ENCODE measurements at regions of chr5 and their contacts with region 1.

Region 1: GRCh38 chr5:54646356-54647101 is 129.0 kb downstream of the SNX18 start:
- DNase-seq: peak; percentile 47
- ATAC-seq: peak; percentile 93
- H3K4me3 Mint-ChIP-seq: peak overlapping the region; percentile 71
- H3K27ac Mint-ChIP-seq: peak overlapping the region; percentile 93
- H3K4me1 Mint-ChIP-seq: peaks cover 69% of the 10 kb centered on the region
- H3K27me3 Mint-ChIP-seq: no peaks in the 10 kb centered on the region
- CTCF ChIP-seq: no peak

Region 2: GRCh38 chr5:54610197-54610944 is 36.2 kb before region 1 on chr5:
- CTCF ChIA-PET with region 1: no interaction called
- POLR2A ChIA-PET with region 1: interaction called, 18 read pairs
- intact Hi-C with region 1: loop called (anchors 1 kb)
- DNase-seq: no peak
- ATAC-seq: peak; percentile 94
- H3K4me3 Mint-ChIP-seq: peak overlapping the region; percentile 55
- H3K27ac Mint-ChIP-seq: peak overlapping the region; percentile 71
- H3K4me1 Mint-ChIP-seq: peaks cover 50% of the 10 kb centered on the region
- H3K27me3 Mint-ChIP-seq: no peaks in the 10 kb centered on the region
- CTCF ChIP-seq: no peak

Region 3: DNA sequence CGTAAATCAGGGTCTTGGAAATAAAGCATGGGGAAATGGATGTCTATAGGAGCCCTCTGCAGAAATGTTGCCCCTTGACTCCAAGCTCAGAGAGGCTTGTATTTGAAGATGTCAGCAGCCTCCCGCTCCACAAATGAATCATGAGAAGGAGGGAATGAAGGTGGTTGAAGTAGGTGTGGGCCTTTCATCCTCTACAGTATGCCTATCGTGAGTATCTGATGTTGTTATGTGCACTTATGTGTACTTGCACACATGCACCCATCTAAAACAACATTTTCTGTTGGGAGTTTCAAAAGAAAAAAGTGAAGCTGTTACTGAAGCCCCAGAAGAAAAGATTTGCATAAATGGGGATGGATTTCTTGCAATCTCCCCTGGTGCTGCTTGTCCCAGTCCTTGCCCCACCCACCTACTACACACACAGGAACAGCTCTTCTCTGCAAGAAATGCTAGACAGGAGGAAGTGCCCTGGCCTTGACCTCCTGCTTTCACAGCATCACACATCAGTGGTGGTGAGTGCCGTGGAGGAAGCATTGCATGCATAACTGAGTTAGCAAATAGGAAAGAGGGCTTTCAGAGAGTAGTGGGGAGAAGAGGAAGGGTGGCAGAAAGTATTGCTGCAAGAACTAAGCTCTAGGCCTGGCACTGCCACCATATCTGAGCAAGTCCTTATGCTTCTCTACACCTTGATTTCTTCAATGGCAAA is 27.1 kb after region 1 on chr5:
- CTCF ChIA-PET with region 1: no interaction called
- POLR2A ChIA-PET with region 1: interaction called, 7 read pairs
- intact Hi-C with region 1: loop called (anchors 1 kb)
- DNase-seq: peak; percentile 29
- ATAC-seq: peak; percentile 90
- H3K4me3 Mint-ChIP-seq: no peak overlapping the region
- H3K27ac Mint-ChIP-seq: peak overlapping the region; percentile 16
- H3K4me1 Mint-ChIP-seq: peaks cover 80% of the 10 kb centered on the region
- H3K27me3 Mint-ChIP-seq: no peaks in the 10 kb centered on the region
- CTCF ChIP-seq: no peak

Region 4: DNA sequence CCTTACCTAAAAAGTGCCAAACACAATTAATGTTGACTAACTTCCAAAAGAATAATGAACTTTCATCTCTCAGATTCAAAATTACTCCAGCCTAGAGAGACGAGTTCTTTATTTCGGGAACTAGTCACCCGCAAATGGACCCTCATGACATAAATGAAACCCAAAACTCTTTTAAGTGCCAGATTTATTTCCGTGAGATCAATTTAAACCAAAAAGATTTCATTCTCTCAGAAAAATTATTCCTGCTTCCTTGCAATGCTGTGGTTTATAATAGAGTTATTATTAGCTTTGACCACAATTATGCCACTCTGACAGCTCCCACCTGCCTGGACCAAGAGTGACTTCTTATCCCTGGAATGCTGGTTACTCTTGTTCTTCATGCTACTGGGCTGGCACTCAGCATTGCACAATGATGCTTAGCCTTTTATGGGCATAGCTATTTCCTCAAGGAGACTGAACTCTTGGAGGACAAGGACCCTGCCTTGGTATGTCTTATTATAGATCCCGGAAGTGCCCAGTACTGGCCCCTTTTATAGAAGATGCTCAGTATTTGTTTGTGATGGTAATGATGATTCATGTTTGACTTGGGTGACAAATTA is 54.6 kb after region 1 on chr5:
- CTCF ChIA-PET with region 1: no interaction called
- POLR2A ChIA-PET with region 1: no interaction called
- intact Hi-C with region 1: no loop called
- DNase-seq: no peak
- ATAC-seq: no peak
- H3K4me3 Mint-ChIP-seq: no peak overlapping the region
- H3K27ac Mint-ChIP-seq: no peak overlapping the region
- H3K4me1 Mint-ChIP-seq: peaks cover 19% of the 10 kb centered on the region
- H3K27me3 Mint-ChIP-seq: peaks cover 2% of the 10 kb centered on the region
- CTCF ChIP-seq: no peak

Region 5: GRCh38 chr5:54753034-54753433 is 106.5 kb after region 1 on chr5:
- CTCF ChIA-PET with region 1: interaction called, 4 read pairs
- POLR2A ChIA-PET with region 1: interaction called, 3 read pairs
- intact Hi-C with region 1: loop called (anchors 1 kb)
- DNase-seq: no peak
- ATAC-seq: peak; percentile 90
- H3K4me3 Mint-ChIP-seq: peak overlapping the region; percentile 72
- H3K27ac Mint-ChIP-seq: peak overlapping the region; percentile 81
- H3K4me1 Mint-ChIP-seq: peaks cover 60% of the 10 kb centered on the region
- H3K27me3 Mint-ChIP-seq: no peaks in the 10 kb centered on the region
- CTCF ChIP-seq: no peak

Region 6: GRCh38 chr5:54761213-54761701 is 114.7 kb after region 1 on chr5:
- CTCF ChIA-PET with region 1: no interaction called
- POLR2A ChIA-PET with region 1: interaction called, 8 read pairs
- intact Hi-C with region 1: loop called (anchors 1 kb)
- DNase-seq: no peak
- ATAC-seq: no peak
- H3K4me3 Mint-ChIP-seq: no peak overlapping the region
- H3K27ac Mint-ChIP-seq: no peak overlapping the region
- H3K4me1 Mint-ChIP-seq: peaks cover 69% of the 10 kb centered on the region
- H3K27me3 Mint-ChIP-seq: no peaks in the 10 kb centered on the region
- CTCF ChIP-seq: no peak

Region 7: GRCh38 chr5:54785729-54786591 is 139.4 kb after region 1 on chr5:
- CTCF ChIA-PET with region 1: no interaction called
- POLR2A ChIA-PET with region 1: interaction called, 7 read pairs
- intact Hi-C with region 1: loop called (anchors 1 kb)
- DNase-seq: peak; percentile 47
- ATAC-seq: peak; percentile 90
- H3K4me3 Mint-ChIP-seq: no peak overlapping the region
- H3K27ac Mint-ChIP-seq: peak overlapping the region; percentile 88
- H3K4me1 Mint-ChIP-seq: peaks cover 32% of the 10 kb centered on the region
- H3K27me3 Mint-ChIP-seq: no peaks in the 10 kb centered on the region
- CTCF ChIP-seq: no peak